ENCODE measurements at regions of chr14 and their contacts with region 1.

Region 1: DNA sequence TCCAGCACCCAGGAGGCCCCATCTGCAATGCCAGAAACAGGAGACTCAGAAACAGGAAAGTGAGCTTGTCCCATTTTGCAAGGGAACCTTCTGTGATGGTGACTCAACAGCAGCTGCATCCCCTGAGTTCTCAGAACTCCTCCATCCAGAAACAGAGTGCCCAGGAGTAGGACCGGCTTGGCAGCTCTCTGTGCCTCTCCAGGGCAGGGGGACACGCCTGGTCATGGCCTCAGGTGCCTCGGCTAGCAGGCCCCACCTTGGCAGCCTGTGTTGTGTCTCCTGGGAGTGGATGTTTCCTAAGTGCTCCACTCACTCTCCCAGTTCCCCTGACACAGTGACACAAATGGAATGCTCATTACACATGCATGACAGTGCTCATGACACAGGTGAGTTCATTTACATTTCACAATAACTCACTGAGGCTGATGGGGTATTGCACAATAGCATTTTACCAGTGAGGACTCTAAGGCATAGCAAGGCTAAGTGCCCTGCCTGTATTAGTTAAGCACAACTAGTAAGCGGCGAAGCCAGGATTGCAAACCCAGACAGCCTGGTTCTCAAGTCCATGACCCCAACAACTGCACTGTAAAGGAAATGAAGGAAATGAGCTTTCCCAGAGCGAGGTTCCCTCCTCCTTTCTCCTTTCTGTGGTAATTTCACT is 47.3 kb downstream of the CALM1 start:
- DNase-seq: no peak
- ATAC-seq: no peak
- H3K4me3 Mint-ChIP-seq: no peak overlapping the region
- H3K27ac Mint-ChIP-seq: no peak overlapping the region
- H3K4me1 Mint-ChIP-seq: peaks cover 59% of the 10 kb centered on the region
- H3K27me3 Mint-ChIP-seq: no peaks in the 10 kb centered on the region
- CTCF ChIP-seq: no peak

Region 2: DNA sequence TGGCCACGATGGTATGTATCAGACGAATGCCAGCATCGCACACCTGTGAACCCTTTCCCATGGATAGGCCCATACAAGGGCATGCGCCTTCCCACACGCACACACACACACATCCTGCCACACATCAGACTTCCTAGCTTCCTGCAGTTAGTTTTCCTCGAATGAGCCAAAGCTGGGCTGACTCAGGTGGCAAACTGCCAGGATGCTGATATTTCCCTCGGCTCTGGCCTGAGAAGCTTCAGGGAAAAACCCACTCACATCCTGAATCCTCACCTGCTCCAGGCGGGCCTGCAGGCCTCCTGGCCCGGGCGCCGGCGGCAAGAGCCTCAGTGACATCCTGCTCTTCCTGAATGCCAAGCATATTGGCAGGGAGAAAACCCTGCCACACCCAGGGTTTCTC is 25.0 kb before region 1 on chr14:
- CTCF ChIA-PET with region 1: no interaction called
- POLR2A ChIA-PET with region 1: no interaction called
- DNase-seq: no peak
- ATAC-seq: no peak
- H3K4me3 Mint-ChIP-seq: no peak overlapping the region
- H3K27ac Mint-ChIP-seq: no peak overlapping the region
- H3K4me1 Mint-ChIP-seq: peaks cover 6% of the 10 kb centered on the region
- H3K27me3 Mint-ChIP-seq: no peaks in the 10 kb centered on the region
- CTCF ChIP-seq: no peak

Region 3: DNA sequence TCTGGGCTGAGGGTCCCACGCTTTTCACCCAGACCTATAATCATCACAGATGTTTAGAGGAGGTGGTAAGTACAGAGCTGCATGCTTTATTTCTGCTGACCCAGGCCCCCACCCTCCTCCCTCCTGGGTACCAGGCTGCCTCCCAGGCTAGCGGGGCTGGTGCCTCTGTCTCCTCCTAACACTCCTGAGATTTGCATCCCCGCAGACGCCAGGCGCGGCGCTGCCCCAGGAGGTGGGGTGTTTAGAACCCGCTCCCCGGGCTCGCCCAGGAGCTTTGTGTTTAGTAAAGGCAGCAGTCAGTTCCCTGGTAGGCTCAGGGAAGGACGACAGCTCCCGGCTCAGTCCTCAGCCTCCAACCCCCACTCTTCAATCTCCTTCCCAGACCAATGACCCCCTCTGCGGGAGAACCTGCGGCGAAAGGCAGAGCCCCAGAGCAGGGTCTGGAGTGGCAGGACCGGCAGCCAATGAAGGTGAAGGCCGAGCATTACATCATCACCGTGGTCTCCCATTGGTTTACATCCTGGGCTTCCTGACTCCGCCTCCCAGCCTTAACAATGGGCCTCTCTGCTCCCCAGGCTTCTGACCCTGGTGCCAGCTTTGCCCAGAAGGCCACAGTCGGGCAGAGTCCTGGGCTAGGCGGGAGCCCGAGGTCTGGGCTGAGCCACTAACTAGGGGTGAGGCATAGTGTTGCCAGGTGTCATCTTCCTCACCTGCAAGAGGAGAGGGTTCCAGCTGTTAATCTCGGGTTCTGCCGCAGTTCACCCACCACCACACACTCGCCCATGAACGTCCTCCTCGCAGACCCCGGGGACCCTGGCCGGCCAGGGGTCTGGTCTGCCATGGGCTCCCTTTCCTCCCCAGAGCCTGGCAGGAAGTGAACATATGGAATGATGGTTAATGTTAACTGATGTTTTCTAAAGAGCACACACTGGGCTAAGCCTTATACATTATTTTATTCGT is 10.2 kb after region 1 on chr14:
- CTCF ChIA-PET with region 1: interaction called, 10 read pairs
- POLR2A ChIA-PET with region 1: no interaction called
- DNase-seq: peak; percentile 96
- ATAC-seq: peak; percentile 98
- H3K4me3 Mint-ChIP-seq: peak overlapping the region; percentile 76
- H3K27ac Mint-ChIP-seq: peak overlapping the region; percentile 94
- H3K4me1 Mint-ChIP-seq: peaks cover 15% of the 10 kb centered on the region
- H3K27me3 Mint-ChIP-seq: no peaks in the 10 kb centered on the region
- CTCF ChIP-seq: no peak

Region 4: DNA sequence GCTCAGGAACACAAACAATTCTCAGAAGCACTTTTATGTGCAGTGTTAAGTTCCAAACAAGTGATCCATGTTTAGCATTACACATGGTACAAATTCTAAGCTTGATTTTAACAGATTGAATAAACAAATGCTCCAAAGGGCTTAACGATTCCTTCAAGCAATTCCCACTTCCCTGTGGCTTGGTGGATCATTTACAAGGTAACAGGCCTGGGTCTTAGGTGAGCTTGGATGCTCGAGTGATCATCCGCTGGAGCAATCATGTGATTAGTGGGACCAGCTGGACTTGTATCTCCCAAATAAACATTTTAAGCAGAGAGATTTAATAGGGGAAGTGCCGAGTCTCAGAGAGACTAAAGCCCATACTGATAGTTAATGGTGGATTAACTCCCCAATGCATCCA is 23.3 kb after region 1 on chr14:
- CTCF ChIA-PET with region 1: no interaction called
- POLR2A ChIA-PET with region 1: no interaction called
- DNase-seq: no peak
- ATAC-seq: no peak
- H3K4me3 Mint-ChIP-seq: no peak overlapping the region
- H3K27ac Mint-ChIP-seq: no peak overlapping the region
- H3K4me1 Mint-ChIP-seq: no peaks in the 10 kb centered on the region
- H3K27me3 Mint-ChIP-seq: peaks cover 5% of the 10 kb centered on the region; the same call in 1 of the 2 replicates
- CTCF ChIP-seq: no peak

Measured in WTC11 (cell line).